OCI-LY7 (cell line): ENCODE measurements at regions of chr2 and their contacts with region 1.

Region 1: GRCh38 chr2:237512774-237513466 is 25.9 kb downstream of the MLPH start:
- DNase-seq: peak; percentile 85
- H3K4me3 ChIP-seq: no peak overlapping the region
- H3K27ac ChIP-seq: no peak overlapping the region
- H3K4me1 ChIP-seq: peaks cover 33% of the 10 kb centered on the region
- CTCF ChIP-seq: peak; percentile 97

Region 2: DNA sequence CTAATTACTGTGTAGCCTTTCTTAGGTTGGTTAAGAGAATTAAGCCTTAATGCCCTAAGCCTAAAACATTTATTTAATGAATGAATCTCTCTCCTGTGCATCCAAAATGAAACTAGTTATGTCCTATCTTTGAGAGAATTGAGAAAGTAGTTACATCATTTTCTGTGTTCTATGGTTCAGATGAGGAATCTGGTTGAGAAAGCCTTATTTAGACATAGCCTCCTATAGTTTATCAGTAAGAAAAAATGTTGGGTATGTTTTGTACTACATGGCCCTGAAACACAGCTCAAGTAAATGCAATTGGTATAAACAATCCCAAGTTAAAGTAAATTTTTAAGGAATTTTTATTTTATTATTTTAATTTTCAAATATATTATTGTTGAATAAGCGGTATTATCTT is 320.6 kb after region 1 on chr2:
- CTCF ChIA-PET with region 1: no interaction called
- POLR2A ChIA-PET with region 1: no interaction called
- intact Hi-C with region 1: loop called (anchors 2 kb)
- DNase-seq: no peak
- H3K4me3 ChIP-seq: no peak overlapping the region
- H3K27ac ChIP-seq: no peak overlapping the region
- H3K4me1 ChIP-seq: no peaks in the 10 kb centered on the region
- CTCF ChIP-seq: no peak